ENCODE measurements at regions of chr12 and their contacts with region 1.

Region 1: GRCh38 chr12:40216516-40217288 is 8.1 kb upstream of the LRRK2 start:
- DNase-seq: no peak
- H3K4me3 ChIP-seq: no peak overlapping the region
- H3K27ac ChIP-seq: no peak overlapping the region
- H3K4me1 ChIP-seq: peaks cover 12% of the 10 kb centered on the region
- H3K27me3 ChIP-seq: no peaks in the 10 kb centered on the region
- CTCF ChIP-seq: no peak

Region 2: DNA sequence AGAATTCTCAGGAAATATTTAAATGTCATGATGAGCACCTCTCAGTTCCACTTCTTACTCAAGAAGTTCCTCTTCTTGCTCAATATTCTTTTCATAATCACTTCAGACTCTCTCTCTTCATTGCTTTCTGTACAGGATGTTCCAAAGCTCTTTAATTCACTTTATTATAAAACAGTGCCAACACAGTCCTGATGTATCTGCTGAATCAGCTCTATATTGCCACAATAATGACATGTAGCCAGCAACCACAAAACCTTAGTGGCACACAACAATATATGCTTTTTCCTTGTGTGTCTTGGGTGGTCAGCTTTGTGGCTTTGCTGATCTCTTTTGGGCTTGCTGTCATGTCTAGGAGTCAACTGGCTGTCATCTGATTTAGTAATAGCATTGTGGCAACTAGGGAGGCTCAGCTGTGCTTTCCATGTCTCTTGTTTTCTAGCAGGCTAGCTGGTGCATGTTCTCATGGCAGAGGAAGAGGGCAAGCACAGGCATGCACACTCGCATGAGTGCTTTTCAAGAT is 58.0 kb before region 1 on chr12:
- CTCF ChIA-PET with region 1: no interaction called
- dilution Hi-C with region 1: no loop called
- in situ Hi-C with region 1: no loop called
- intact Hi-C with region 1: loop called (anchors 5 kb)
- DNase-seq: peak; percentile 98
- H3K4me3 ChIP-seq: peak overlapping the region in 1 of 3 experiments; percentile 22
- H3K27ac ChIP-seq: peak overlapping the region; percentile 12
- H3K4me1 ChIP-seq: peaks cover 24% of the 10 kb centered on the region
- H3K27me3 ChIP-seq: no peaks in the 10 kb centered on the region
- CTCF ChIP-seq: no peak

Measured in mammary epithelial cell (primary cell).